Activated CD4-positive, alpha-beta T cell treated with anti-CD3 and anti-CD28 coated beads for 36 hours (primary cell): ENCODE measurements at regions of chr14 and their contacts with region 1.

Region 1: DNA sequence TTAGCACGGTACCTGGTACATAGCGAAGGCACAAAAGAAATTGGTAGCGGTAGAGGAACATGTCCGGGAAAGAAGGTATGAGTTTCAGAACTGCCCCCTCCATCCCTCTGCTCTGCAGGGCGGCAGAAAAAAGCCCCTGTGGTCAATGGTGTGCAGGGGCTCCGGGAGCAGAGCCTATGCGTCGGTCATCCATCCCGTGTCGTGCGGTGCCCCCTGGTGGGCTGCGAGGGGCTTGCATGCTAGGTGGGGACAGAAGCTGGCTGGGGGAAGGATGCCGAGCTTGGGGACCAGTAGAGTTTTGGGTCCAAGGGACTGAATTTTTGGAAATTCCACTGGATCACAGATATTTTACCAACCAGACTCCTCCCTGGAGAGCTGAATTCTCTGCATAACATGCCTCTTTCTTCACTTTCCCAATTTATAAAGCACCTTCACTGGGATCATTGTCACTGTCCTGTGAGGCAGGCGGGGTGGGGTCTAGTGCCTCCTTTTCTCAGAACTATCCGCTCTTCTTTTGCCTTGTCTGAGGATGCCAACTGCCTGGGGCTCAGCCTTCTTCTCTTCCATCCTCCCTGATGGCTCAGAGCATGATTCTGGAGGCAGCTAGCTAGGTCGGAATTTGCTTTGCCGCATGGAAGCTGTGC is 148.7 kb downstream of the SMOC1 start:
- DNase-seq: peak; percentile 84
- ATAC-seq: peak; percentile 68
- H3K4me3 Mint-ChIP-seq: no peak overlapping the region
- H3K27ac Mint-ChIP-seq: no peak overlapping the region
- H3K4me1 Mint-ChIP-seq: no peaks in the 10 kb centered on the region
- H3K27me3 Mint-ChIP-seq: peaks cover 2% of the 10 kb centered on the region

Region 2: GRCh38 chr14:69574263-69574953 is 453.5 kb before region 1 on chr14 and contains the start of gene CCDC177:
- CTCF ChIA-PET with region 1: no interaction called
- POLR2A ChIA-PET with region 1: no interaction called
- intact Hi-C with region 1: loop called in 1 of 2 experiments (anchors 10 kb)
- DNase-seq: peak; percentile 88
- ATAC-seq: peak; percentile 78
- H3K4me3 Mint-ChIP-seq: peak within 1 kb of the TSS; percentile 58
- H3K27ac Mint-ChIP-seq: peak within 1 kb of the TSS; percentile 4
- H3K4me1 Mint-ChIP-seq: peaks cover 10% of the 10 kb centered on the region
- H3K27me3 Mint-ChIP-seq: peaks cover 42% of the 10 kb centered on the region
- total RNA-seq, gene CCDC177: not detected

Region 3: DNA sequence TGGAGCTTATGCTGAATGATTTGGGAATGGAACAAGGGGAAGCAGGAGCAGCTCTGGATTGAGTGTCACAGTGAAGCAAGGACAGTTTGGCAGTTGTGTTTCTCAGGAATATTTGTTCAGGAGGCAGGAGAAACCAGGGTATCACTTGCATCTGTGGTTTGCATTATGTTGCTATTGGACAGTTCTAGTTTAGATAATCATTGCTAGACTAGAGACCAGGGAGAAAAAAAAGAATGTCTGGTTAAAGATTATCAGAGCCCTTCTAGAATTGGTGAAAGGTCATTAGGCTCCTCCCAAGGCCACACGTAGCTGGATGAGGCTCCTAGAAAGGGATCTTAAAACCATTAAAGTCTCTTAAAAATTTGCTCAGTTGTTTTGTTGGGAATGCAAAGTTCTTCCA is 278.0 kb before region 1 on chr14:
- CTCF ChIA-PET with region 1: no interaction called
- POLR2A ChIA-PET with region 1: no interaction called
- intact Hi-C with region 1: no loop called
- DNase-seq: no peak
- ATAC-seq: no peak
- H3K4me3 Mint-ChIP-seq: no peak overlapping the region
- H3K27ac Mint-ChIP-seq: no peak overlapping the region
- H3K4me1 Mint-ChIP-seq: peaks cover 11% of the 10 kb centered on the region
- H3K27me3 Mint-ChIP-seq: no peaks in the 10 kb centered on the region

Region 4: GRCh38 chr14:69818757-69819191 is 209.1 kb before region 1 on chr14:
- CTCF ChIA-PET with region 1: interaction called, 43 read pairs
- POLR2A ChIA-PET with region 1: no interaction called
- intact Hi-C with region 1: loop called (anchors 1 kb)
- DNase-seq: peak; percentile 65
- ATAC-seq: peak; percentile 82
- H3K4me3 Mint-ChIP-seq: no peak overlapping the region
- H3K27ac Mint-ChIP-seq: no peak overlapping the region
- H3K4me1 Mint-ChIP-seq: peaks cover 4% of the 10 kb centered on the region
- H3K27me3 Mint-ChIP-seq: peaks cover 4% of the 10 kb centered on the region

Region 5: DNA sequence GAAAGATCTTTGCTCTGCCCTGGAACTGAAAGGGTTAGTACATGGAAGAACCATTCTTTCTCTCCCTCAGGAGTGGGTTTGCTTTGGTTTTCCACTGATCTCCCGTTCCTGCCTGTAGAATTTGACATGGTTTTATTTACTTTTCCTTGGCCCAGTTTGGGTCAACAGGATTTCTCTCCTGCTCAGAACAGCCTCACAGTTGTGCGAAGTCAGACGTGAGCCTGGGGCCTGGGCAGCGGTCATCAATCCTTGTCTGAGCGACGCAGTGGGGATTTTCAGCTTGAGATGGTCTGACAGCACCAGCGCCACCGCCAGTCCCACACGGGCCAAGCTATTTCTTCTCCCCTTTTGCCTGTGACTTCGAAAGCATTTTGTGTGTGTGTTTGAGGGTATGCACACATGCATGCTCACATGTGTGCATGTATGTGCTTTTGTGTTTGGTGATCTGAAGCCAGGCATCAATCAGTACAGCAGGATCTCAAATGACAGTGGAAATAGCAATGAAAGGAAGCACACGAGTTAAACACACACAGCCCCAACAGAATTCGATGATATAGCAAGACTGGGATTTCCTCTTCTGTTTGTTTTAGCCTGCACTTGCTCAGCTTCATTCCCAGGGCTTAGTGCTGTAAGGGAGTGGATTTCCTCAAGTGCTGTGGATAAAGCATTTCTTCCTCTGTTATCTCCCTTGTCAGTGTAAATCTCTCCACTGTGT is 90.4 kb before region 1 on chr14:
- CTCF ChIA-PET with region 1: no interaction called
- POLR2A ChIA-PET with region 1: no interaction called
- intact Hi-C with region 1: no loop called
- DNase-seq: no peak
- ATAC-seq: no peak
- H3K4me3 Mint-ChIP-seq: no peak overlapping the region
- H3K27ac Mint-ChIP-seq: no peak overlapping the region
- H3K4me1 Mint-ChIP-seq: no peaks in the 10 kb centered on the region
- H3K27me3 Mint-ChIP-seq: peaks cover 21% of the 10 kb centered on the region

Region 6: DNA sequence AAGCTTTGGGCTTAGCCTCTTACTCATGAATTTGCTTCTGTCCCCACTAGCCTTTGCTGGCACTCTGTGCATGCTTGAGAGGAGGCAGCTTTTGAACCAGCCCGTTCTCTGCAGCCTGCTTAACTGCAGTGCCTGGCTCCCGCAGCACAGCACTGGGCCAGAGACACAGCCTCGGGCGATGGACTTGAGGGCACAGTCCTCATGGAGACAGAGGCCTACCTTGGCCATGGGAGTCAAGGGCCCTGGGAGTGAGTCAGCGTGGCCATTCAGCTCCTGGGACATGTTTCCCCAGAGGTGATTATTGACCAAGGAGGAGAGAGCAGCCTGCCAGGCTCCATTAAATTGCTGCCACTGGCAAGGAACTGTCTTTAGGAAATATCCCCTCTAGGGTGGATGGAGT is 55.2 kb before region 1 on chr14:
- CTCF ChIA-PET with region 1: no interaction called
- POLR2A ChIA-PET with region 1: no interaction called
- intact Hi-C with region 1: no loop called
- DNase-seq: no peak
- ATAC-seq: no peak
- H3K4me3 Mint-ChIP-seq: no peak overlapping the region
- H3K27ac Mint-ChIP-seq: no peak overlapping the region
- H3K4me1 Mint-ChIP-seq: no peaks in the 10 kb centered on the region
- H3K27me3 Mint-ChIP-seq: peaks cover 17% of the 10 kb centered on the region

Region 7: GRCh38 chr14:70013269-70013873 is 14.5 kb before region 1 on chr14:
- CTCF ChIA-PET with region 1: interaction called, 21 read pairs
- POLR2A ChIA-PET with region 1: no interaction called
- intact Hi-C with region 1: no loop called
- DNase-seq: peak; percentile 77
- ATAC-seq: peak; percentile 49
- H3K4me3 Mint-ChIP-seq: no peak overlapping the region
- H3K27ac Mint-ChIP-seq: no peak overlapping the region
- H3K4me1 Mint-ChIP-seq: peaks cover 5% of the 10 kb centered on the region
- H3K27me3 Mint-ChIP-seq: peaks cover 15% of the 10 kb centered on the region

Region 8: GRCh38 chr14:70073924-70074566 is 46.1 kb after region 1 on chr14:
- CTCF ChIA-PET with region 1: interaction called, 16 read pairs
- POLR2A ChIA-PET with region 1: no interaction called
- intact Hi-C with region 1: no loop called
- DNase-seq: peak; percentile 81
- ATAC-seq: peak; percentile 73
- H3K4me3 Mint-ChIP-seq: no peak overlapping the region
- H3K27ac Mint-ChIP-seq: no peak overlapping the region
- H3K4me1 Mint-ChIP-seq: no peaks in the 10 kb centered on the region
- H3K27me3 Mint-ChIP-seq: peaks cover 9% of the 10 kb centered on the region

Region 9: DNA sequence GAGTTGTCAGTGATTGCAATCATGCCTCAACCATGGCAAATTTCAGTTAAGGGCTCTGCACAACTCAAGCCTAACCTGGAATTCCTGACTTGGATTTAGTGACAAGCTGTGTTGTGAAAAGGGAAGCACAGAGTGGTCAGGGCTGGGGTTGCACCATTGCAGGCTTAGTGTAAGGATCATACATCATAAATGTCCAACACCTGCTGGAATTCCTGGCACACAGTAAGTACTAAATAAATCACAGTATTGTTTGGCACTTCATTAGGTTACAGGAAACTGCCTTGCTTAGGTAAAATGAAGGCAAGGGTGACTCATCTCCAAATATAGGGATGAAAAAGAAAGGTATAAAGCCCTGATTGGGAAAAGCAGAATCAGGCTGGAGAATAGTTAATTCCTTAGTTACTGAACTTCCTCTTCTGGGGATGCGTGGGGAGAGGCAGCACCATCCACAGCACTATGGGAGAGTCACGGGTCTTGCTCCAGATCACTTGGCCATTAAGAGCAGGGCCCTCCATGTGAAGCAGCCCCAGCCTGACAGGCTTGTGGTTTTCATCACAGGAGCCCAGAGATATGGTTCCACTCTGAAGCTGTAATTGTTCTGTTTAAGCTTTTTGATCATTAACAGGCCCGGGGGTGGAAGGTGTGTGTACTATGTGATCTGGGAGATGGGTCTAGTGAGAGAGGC is 121.1 kb after region 1 on chr14:
- CTCF ChIA-PET with region 1: no interaction called
- POLR2A ChIA-PET with region 1: no interaction called
- intact Hi-C with region 1: no loop called
- DNase-seq: no peak
- ATAC-seq: no peak
- H3K4me3 Mint-ChIP-seq: no peak overlapping the region
- H3K27ac Mint-ChIP-seq: no peak overlapping the region
- H3K4me1 Mint-ChIP-seq: no peaks in the 10 kb centered on the region
- H3K27me3 Mint-ChIP-seq: peaks cover 11% of the 10 kb centered on the region